Ovary (tissue), 10 donors: ENCODE measurements at regions of chr16 and their contacts with region 1.

Region 1: DNA sequence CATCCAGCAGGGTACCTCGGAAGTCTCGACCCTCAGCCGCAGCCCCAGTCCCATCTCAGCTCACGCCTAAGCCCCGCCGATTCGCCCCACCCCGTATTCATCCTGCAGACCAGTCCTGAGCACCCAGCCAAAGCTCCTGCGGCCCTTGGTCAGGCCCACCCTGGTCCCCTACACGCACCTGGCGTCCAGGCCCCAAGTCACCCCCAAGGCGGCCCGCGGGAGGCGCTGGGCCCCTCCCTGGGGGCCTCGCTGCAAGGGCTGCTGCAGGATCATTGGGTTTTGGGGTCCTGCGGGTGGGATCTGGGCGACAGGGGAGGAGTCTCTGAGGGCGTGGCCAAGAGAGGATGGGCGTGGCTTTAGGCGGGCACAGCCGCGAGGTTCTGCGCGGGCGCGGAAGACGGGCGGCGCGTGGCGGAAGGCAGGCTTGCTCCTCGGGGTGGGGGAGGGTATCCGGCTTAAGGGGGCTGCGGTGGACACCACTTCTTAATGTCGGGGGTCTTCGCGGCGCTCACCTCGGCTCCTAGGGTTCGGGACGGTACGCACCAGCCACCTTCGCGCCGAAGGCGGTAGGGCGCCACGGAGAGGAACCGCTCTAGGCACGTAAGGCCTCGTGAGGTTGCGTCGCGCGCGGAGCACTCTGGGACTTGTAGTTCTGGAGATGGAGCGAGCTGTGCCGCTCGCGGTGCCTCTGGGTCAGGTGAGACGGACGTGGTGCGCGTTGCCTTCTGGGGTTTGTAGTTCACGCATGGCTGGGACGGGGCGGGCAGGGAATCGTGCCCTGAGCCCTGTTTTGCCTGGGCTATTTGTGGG is at the starts of genes HCFC1R1 and THOC6:
- DNase-seq: peak; percentile 94 to 97 (median 95)
- H3K4me3 ChIP-seq: peak within 1 kb of the TSS; percentile 76
- H3K27ac ChIP-seq: peak within 1 kb of the TSS; percentile 91 to 92
- H3K4me1 ChIP-seq: peaks cover 21% of the 10 kb centered on the region
- H3K27me3 ChIP-seq: no peaks in the 10 kb centered on the region
- CTCF ChIP-seq: peak in 1 of 3 donors; percentile 18
- EP300 ChIP-seq: no peak
- POLR2A ChIP-seq: peak; percentile 62
- total RNA-seq, gene HCFC1R1: 15.9 to 73.1 (median 55.1) TPM
- total RNA-seq, gene THOC6: 6.7 to 21.0 (median 15.6) TPM

Region 2: GRCh38 chr16:3282730-3283524 is 259.1 kb after region 1 on chr16 and contains the start of gene ZNF263:
- intact Hi-C with region 1: loop called in 1 of 4 experiments (anchors 10 kb)
- DNase-seq: peak; percentile 94 to 97 (median 95)
- H3K4me3 ChIP-seq: peak within 1 kb of the TSS; percentile 97
- H3K27ac ChIP-seq: peak within 1 kb of the TSS; percentile 92 to 100
- H3K4me1 ChIP-seq: peaks cover 8% of the 10 kb centered on the region
- H3K27me3 ChIP-seq: no peaks in the 10 kb centered on the region
- CTCF ChIP-seq: no peak
- EP300 ChIP-seq: peak; percentile 41
- POLR2A ChIP-seq: peak; percentile 78
- total RNA-seq, gene ZNF263: 32.1 to 46.1 (median 35.8) TPM